ENCODE measurements at regions of chr2 and their contacts with region 1.

Region 1: DNA sequence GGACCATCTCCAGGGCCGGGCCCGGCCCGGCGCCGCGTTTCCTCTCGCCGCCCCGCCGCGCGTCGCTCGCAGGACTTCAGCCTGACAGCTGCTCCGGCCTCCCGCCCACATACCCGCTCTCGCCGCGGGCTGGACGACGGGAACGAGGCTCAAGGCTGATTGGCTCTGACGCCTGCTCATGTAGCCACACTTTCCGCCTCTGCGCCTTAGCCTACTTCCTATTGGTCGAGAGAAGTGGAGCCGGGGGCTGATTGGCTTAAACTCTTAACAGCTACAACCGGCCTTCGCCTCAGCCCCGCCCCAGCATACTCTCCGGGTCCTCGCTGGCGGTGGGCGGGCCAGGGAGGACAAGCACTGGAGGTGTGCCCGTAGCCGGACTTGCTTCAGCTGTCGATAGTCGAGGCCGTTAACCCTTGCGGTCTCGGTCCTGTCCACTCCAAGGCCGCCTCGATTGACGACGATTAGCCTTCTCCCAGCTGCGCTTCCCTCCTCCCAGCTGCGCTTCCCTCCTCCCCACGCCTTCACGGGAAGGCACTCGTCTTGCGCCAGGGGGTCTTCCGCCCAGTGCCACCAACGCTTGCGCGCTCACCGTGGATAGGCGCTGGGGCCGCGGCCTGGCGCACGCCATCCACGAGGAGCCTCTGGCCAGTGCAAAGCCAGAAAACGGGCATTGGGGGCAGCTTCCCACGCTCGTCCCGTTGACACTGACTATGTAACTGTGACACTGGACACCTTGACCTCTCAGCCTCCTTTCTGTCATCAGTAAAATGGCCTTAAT is at the start of gene PRADC1:
- DNase-seq: peak; percentile 97
- H3K4me3 Mint-ChIP-seq: peak within 1 kb of the TSS; percentile 86
- H3K27ac Mint-ChIP-seq: peak within 1 kb of the TSS; percentile 75
- H3K4me1 Mint-ChIP-seq: peaks cover 35% of the 10 kb centered on the region
- H3K27me3 Mint-ChIP-seq: no peaks in the 10 kb centered on the region
- total RNA-seq, gene PRADC1: 10.1 to 10.7 TPM

Region 2: DNA sequence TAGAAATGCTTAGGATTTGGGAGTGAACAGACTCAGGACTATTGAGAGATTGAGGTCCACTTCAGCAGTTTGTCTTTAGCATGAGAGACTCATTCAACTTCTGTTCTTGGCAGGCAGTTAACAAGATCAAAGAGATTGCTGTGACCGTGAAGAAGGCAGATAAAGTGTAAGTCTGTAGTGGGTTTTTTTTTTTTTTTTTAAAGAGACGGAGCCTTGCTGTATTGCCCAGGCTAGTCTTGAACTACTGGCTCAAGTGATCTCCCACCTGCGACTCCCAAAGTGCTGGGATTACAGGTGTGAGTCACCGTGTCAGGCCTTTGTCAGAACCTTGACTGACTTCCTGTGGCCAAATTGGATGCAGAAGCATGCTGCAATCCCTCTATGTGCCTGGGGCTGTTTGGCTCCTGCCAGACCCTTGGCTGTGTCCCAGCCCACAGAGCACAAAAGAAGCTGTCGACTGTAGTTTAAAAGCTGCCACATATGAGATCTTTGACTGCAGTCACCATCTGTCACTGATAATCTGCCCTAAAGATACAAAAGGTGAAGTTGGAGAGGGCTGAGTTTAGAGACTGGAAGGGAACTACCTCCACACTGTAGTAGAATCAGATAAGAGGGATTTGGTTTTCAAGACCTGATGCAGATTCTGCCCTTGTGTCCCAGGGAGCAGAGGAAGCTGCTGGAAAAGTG is 10.7 kb after region 1 on chr2:
- CTCF ChIA-PET with region 1: interaction called, 6 read pairs
- POLR2A ChIA-PET with region 1: interaction called, 25 read pairs
- DNase-seq: no peak
- H3K4me3 Mint-ChIP-seq: no peak overlapping the region
- H3K27ac Mint-ChIP-seq: peak overlapping the region; percentile 33
- H3K4me1 Mint-ChIP-seq: peaks cover 30% of the 10 kb centered on the region
- H3K27me3 Mint-ChIP-seq: no peaks in the 10 kb centered on the region

Region 3: DNA sequence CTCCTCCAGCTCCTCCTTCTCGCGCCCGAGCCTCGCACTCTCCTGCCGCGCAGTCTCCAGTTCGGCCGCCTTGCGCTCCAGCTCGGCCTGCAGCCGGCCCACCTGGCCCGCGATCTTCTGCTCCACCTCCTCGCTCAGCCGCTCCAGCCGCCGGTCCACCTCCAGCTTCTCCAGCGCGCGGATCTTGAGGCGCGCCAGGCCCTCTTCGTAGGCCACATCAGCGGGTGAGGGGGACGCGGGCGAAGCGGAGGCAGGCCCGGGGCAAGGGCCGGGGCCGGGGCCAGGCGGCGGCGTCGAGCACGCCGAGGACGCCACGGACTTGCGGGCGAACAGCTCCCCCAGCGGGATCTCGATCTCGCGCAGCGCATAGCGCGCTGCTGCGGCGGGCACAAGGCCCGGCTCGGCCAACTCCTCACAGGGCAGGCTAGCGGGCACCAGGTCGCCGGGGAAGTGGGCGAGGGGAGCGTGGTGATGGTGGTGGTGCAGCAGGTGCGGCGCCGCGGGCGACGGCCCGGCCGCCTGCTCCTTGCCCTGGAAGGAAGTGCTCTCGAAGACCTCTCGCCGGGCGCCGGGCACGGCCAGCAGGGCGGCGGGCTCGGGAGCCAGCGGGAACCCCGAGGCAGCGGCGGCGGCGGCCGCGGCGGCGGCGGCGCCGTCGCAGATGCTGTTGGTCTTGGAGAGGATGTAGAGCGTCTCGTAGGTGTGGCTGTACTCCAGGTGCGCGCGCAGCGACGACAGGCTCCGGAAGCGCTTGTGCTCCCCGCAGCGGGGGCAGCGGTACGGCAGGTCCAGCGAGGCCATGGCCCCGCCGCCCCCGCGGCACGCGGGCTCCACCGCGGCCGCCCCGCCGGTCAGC is 35.7 kb after region 1 on chr2:
- CTCF ChIA-PET with region 1: no interaction called
- POLR2A ChIA-PET with region 1: interaction called, 18 read pairs
- DNase-seq: peak; percentile 84
- H3K4me3 Mint-ChIP-seq: peak overlapping the region; percentile 41
- H3K27ac Mint-ChIP-seq: no peak overlapping the region
- H3K4me1 Mint-ChIP-seq: peaks cover 24% of the 10 kb centered on the region
- H3K27me3 Mint-ChIP-seq: no peaks in the 10 kb centered on the region

Region 4: GRCh38 chr2:73385595-73386341 is 152.4 kb after region 1 on chr2 and contains the start of gene ALMS1:
- CTCF ChIA-PET with region 1: interaction called, 4 read pairs
- POLR2A ChIA-PET with region 1: interaction called, 19 read pairs
- DNase-seq: peak; percentile 92
- H3K4me3 Mint-ChIP-seq: peak within 1 kb of the TSS; percentile 90
- H3K27ac Mint-ChIP-seq: peak within 1 kb of the TSS; percentile 85
- H3K4me1 Mint-ChIP-seq: peaks cover 32% of the 10 kb centered on the region
- H3K27me3 Mint-ChIP-seq: peaks cover 4% of the 10 kb centered on the region
- total RNA-seq, gene ALMS1: 16.1 to 20.4 TPM

Region 5: DNA sequence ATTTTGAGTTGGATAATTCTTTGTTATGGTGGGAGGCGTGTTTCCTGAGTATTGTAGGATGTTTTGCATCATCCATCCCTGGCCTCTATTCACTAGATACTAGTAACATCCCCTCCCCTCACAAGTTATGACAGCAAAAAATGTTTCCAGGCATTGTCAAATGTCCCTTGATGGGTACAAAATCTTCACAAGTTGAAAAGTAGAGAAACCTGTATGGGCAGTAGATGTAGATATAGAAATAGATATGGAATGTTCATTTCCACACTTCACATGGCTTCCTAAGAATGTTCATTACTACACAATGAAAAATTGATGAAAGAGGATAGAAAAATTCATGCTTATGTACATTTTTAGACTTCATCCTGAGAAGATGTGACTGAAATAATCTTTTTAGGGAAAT is 197.7 kb after region 1 on chr2:
- CTCF ChIA-PET with region 1: no interaction called
- POLR2A ChIA-PET with region 1: no interaction called
- DNase-seq: no peak
- H3K4me3 Mint-ChIP-seq: no peak overlapping the region
- H3K27ac Mint-ChIP-seq: no peak overlapping the region
- H3K4me1 Mint-ChIP-seq: no peaks in the 10 kb centered on the region
- H3K27me3 Mint-ChIP-seq: no peaks in the 10 kb centered on the region